PC-3 (cell line): ENCODE measurements at regions of chr5 and their contacts with region 1.

Region 1: DNA sequence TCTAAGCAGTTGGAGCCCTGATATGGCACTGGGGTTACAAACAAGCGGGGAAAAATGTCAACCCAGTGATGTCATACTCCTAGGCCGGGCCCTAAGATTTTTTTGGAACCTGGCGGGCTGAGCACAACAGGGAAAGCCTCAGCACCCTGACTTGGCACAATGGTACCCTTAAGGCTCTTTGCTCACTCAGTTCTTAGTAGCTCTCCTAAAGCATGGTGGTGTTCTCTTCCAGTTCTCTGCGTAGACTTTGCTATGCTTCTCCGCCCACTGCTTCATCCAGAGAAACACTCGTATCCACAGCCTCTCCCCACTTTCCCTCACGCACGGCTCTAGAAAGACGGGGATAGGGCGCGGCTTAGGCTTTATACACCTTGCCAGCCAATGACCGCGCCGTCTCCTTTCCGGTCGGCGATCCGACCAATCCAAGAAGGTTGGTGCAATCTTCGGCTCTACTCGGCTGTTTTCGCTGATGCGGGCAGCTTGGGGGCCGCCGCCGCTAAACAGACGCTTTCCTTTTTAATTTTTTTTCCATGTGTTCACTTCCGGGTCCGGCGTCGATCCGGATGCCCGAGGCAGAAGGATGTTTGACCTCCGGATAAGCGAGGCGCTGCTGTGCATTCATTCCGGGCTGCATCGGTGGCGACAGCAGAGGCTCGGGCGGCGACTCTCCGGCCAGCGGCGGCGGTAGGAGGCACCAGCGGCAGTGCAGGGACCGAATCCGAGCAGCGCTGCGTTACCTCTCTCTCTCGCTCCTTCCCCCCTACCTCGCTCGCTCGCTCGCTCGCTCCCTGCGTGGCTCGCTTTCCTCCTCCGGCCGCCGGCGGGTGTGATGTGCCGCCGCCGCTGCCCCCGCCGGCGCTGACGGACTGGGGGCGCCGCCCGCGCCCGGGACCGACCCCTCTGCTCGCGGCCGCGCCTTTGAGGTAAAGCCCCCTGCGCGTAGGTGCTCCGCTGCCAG is at the start of gene CSNK1G3:
- DNase-seq: peak; percentile 94
- ATAC-seq: peak; percentile 95
- H3K4me3 ChIP-seq: peak within 1 kb of the TSS; percentile 91
- H3K27ac ChIP-seq: peak within 1 kb of the TSS; percentile 54
- H3K4me1 ChIP-seq: peaks cover 25% of the 10 kb centered on the region
- H3K27me3 ChIP-seq: no peaks in the 10 kb centered on the region
- CTCF ChIP-seq: no peak
- total RNA-seq, gene CSNK1G3: 21.6 and 23.4 TPM in 2 replicates

Region 2: DNA sequence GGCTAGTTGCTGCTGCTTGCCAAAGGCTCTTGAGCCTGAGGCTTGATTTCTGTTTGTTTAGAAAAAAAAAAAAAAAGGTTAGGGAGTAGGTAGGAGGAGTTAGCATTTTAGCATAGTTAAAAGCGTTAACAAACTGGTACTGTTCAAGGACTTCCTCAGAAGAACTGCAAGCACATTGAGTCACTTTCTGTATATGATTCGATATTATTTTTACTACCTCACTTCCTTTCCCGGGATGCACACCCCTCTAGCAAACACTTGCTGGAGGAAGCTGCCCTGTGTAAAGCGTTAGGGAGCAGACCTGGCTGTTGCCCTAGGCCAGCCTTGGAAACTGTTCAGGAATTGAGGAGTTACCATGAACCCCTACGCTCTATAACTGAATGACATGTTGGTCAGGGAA is 73.0 kb before region 1 on chr5:
- CTCF ChIA-PET with region 1: no interaction called
- POLR2A ChIA-PET with region 1: no interaction called
- intact Hi-C with region 1: loop called (anchors 5 kb)
- DNase-seq: peak; percentile 53
- ATAC-seq: peak; percentile 97
- H3K4me3 ChIP-seq: no peak overlapping the region
- H3K27ac ChIP-seq: peak overlapping the region; percentile 13; the same call in 1 of the 2 replicates
- H3K4me1 ChIP-seq: peaks cover 11% of the 10 kb centered on the region; the same call in 1 of the 2 replicates
- H3K27me3 ChIP-seq: no peaks in the 10 kb centered on the region
- CTCF ChIP-seq: no peak

Region 3: DNA sequence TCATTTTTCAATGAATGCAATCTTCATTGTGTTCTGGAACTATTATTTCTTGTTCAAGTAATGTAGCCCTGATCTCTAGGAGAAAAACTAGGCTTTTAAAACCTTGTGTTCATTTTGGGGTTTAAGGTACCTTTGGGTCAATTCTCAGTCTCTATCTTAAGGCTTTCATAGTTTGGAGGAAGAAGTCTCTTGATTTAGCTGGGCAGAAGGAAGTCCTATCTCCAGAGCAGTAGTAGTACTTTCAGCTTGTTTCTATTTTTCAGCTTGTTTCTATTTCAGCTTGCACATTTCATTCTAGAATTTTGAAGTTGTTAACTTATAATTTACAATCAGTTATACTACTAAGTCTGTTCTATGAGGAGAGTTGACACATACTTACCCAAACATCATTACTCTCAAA is 15.3 kb after region 1 on chr5:
- CTCF ChIA-PET with region 1: no interaction called
- POLR2A ChIA-PET with region 1: no interaction called
- intact Hi-C with region 1: no loop called
- DNase-seq: no peak
- ATAC-seq: no peak
- H3K4me3 ChIP-seq: no peak overlapping the region
- H3K27ac ChIP-seq: no peak overlapping the region
- H3K4me1 ChIP-seq: no peaks in the 10 kb centered on the region
- H3K27me3 ChIP-seq: no peaks in the 10 kb centered on the region
- CTCF ChIP-seq: no peak

Region 4: GRCh38 chr5:123545506-123545905 is 33.6 kb after region 1 on chr5:
- CTCF ChIA-PET with region 1: no interaction called
- POLR2A ChIA-PET with region 1: no interaction called
- intact Hi-C with region 1: loop called (anchors 5 kb)
- DNase-seq: peak; percentile 32
- ATAC-seq: no peak
- H3K4me3 ChIP-seq: no peak overlapping the region
- H3K27ac ChIP-seq: no peak overlapping the region
- H3K4me1 ChIP-seq: peaks cover 17% of the 10 kb centered on the region; the same call in 1 of the 2 replicates
- H3K27me3 ChIP-seq: no peaks in the 10 kb centered on the region
- CTCF ChIP-seq: peak; percentile 61